A673 (cell line): ENCODE measurements at regions of chr3 and their contacts with region 1.

Region 1: GRCh38 chr3:143016321-143016972 is 15.1 kb downstream of the U2SURP start:
- DNase-seq: peak; percentile 38
- H3K4me3 ChIP-seq: no peak overlapping the region
- H3K27ac ChIP-seq: no peak overlapping the region
- H3K4me1 ChIP-seq: no peaks in the 10 kb centered on the region
- H3K27me3 ChIP-seq: no peaks in the 10 kb centered on the region
- CTCF ChIP-seq: peak; percentile 67

Region 2: GRCh38 chr3:142566096-142566495 is 450.4 kb before region 1 on chr3:
- CTCF ChIA-PET with region 1: interaction called, 11 read pairs
- POLR2A ChIA-PET with region 1: no interaction called
- intact Hi-C with region 1: no loop called
- DNase-seq: no peak
- H3K4me3 ChIP-seq: no peak overlapping the region
- H3K27ac ChIP-seq: no peak overlapping the region
- H3K4me1 ChIP-seq: no peaks in the 10 kb centered on the region
- H3K27me3 ChIP-seq: no peaks in the 10 kb centered on the region
- CTCF ChIP-seq: no peak